ENCODE measurements at regions of chr20 and their contacts with region 1.

Region 1: GRCh38 chr20:34615477-34615876 is 57.0 kb downstream of the MAP1LC3A start:
- DNase-seq: no peak
- H3K4me3 Mint-ChIP-seq: no peak overlapping the region
- H3K27ac Mint-ChIP-seq: no peak overlapping the region
- H3K4me1 Mint-ChIP-seq: peaks cover 2% of the 10 kb centered on the region
- H3K27me3 Mint-ChIP-seq: no peaks in the 10 kb centered on the region

Region 2: GRCh38 chr20:34637245-34638038 is 22.0 kb after region 1 on chr20:
- CTCF ChIA-PET with region 1: no interaction called
- POLR2A ChIA-PET with region 1: interaction called, 12 read pairs
- DNase-seq: no peak
- H3K4me3 Mint-ChIP-seq: no peak overlapping the region
- H3K27ac Mint-ChIP-seq: no peak overlapping the region
- H3K4me1 Mint-ChIP-seq: no peaks in the 10 kb centered on the region
- H3K27me3 Mint-ChIP-seq: no peaks in the 10 kb centered on the region